GM12878 (cell line): ENCODE measurements at regions of chr1 and their contacts with region 1.

Region 1: DNA sequence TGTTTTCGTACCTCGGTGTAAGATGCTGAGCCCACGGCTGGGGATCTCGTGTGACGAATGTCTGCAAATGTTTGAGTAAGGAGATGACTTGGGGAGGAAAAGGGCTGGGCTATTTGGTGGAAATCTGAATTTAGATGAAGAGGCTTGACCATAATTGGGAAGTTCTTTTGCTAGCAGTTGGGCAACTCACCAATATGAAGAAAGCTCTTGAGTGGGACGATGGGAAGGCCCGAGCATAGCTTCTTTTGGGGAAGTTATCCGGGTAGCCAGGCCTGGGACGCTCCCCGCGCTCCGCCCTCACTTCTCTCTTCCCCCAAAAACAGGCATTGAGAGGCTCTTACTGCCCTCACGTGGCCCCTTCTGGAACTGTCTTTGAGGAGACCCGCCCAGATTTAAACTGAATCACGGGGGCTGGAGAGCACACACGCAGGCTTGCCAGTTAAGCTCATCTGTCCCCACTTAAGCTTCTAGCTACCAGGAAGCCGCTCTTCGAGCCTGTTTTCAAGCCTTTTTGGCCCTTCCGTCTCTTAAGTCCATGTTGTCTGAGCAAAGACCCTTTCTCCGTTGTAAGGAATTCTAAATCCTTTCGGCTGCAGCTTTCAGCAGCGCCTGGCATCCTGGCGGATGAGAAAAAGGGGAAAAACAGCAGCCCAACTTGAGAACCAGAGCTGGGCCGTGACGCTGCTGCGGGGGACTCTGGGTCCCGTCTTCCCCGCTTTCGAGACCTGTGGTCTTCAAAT is 93.1 kb downstream of the NID1 start:
- DNase-seq: peak; percentile 84
- ATAC-seq: peak; percentile 97
- H3K4me3 ChIP-seq: peak overlapping the region; percentile 58
- H3K27ac ChIP-seq: peak overlapping the region; percentile 80
- H3K4me1 ChIP-seq: peaks cover 7% of the 10 kb centered on the region
- H3K27me3 ChIP-seq: no peaks in the 10 kb centered on the region
- CTCF ChIP-seq: peak; percentile 87 to 95 (median 89); a peak in 5 of 6 replicates
- EP300 ChIP-seq: no peak
- POLR2A ChIP-seq: peak; percentile 75
- RAD21 ChIP-seq: peak; percentile 98

Region 2: DNA sequence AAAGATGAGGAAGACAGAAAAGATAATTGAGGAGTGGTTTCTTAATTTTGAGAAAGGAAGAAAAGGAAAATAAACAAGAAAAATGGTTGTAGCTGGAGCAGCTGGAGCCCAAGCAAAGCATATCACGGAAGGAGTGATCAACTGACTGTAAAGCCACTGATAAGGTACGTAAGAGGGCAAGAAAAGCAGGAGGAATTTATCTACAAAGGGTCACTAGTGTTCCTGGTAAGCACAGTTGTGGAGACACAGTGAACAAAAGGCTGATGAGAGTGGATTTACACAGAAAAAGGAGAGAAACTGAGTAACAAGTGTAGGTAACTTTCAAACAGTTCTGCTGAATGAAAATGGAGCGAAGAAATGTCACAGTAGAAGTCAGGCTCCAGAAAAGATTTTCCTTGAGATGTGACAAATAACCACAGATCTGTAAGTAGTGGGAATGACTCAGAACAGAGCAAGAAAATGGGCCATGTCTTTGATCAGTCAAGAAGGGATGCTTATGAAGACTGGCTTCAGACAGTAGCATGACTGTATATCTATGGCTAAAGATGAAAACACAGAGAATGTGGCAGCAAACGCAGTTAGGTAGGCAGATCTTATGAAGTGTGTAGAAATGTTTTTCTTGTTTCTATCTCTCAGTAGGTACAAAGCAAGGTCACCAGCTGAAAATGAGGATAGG is 765.1 kb before region 1 on chr1:
- CTCF ChIA-PET with region 1: no interaction called
- POLR2A ChIA-PET with region 1: no interaction called
- RAD21 ChIA-PET with region 1: no interaction called
- SMC1A ChIA-PET with region 1: no interaction called
- in situ Hi-C with region 1: no loop called
- intact Hi-C with region 1: no loop called
- DNase-seq: no peak
- ATAC-seq: peak; percentile 67
- H3K4me3 ChIP-seq: no peak overlapping the region
- H3K27ac ChIP-seq: no peak overlapping the region
- H3K4me1 ChIP-seq: no peaks in the 10 kb centered on the region
- H3K27me3 ChIP-seq: no peaks in the 10 kb centered on the region
- CTCF ChIP-seq: no peak
- EP300 ChIP-seq: no peak
- POLR2A ChIP-seq: no peak
- RAD21 ChIP-seq: no peak

Region 3: GRCh38 chr1:235513495-235514366 is 458.0 kb before region 1 on chr1:
- CTCF ChIA-PET with region 1: interaction called, 31 read pairs
- POLR2A ChIA-PET with region 1: no interaction called
- RAD21 ChIA-PET with region 1: interaction called, 19 read pairs
- SMC1A ChIA-PET with region 1: interaction called, 17 read pairs
- in situ Hi-C with region 1: loop called (anchors 5 kb)
- intact Hi-C with region 1: loop called (anchors 2 kb)
- DNase-seq: no peak
- ATAC-seq: peak; percentile 70
- H3K4me3 ChIP-seq: no peak overlapping the region
- H3K27ac ChIP-seq: no peak overlapping the region
- H3K4me1 ChIP-seq: no peaks in the 10 kb centered on the region; the same call in 1 of the 2 replicates
- H3K27me3 ChIP-seq: no peaks in the 10 kb centered on the region
- CTCF ChIP-seq: peak; percentile 79 to 93 (median 82)
- EP300 ChIP-seq: no peak
- POLR2A ChIP-seq: no peak
- RAD21 ChIP-seq: peak; percentile 94

Region 4: DNA sequence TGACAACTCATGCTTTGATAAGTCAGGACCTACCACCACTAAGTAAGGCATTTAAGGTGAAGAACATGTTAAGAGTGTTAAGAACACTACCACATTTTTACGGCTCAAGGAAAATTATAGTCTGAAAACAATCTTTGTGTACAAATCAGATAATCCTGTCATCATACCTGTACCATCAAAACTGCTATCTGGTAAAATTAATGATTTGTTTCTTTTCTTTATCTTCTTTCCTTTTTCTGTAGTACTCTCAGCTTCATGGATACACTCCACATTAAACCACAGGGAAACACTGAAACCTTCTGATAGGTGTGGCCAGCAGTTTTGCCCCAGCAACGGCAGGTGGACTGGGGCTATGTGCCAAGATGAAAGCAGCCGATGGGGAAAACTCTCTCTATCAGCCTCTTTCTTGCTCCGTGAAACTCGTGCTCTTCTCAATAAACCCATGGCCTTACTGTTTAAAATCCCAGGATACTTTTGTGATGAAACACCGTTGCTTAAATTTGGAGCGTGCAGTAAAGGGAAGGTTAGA is 180.1 kb before region 1 on chr1:
- CTCF ChIA-PET with region 1: interaction called, 9 read pairs
- POLR2A ChIA-PET with region 1: no interaction called
- RAD21 ChIA-PET with region 1: interaction called, 8 read pairs
- SMC1A ChIA-PET with region 1: interaction called, 11 read pairs
- in situ Hi-C with region 1: no loop called
- intact Hi-C with region 1: no loop called
- DNase-seq: no peak
- ATAC-seq: no peak
- H3K4me3 ChIP-seq: no peak overlapping the region
- H3K27ac ChIP-seq: no peak overlapping the region
- H3K4me1 ChIP-seq: no peaks in the 10 kb centered on the region
- H3K27me3 ChIP-seq: no peaks in the 10 kb centered on the region
- CTCF ChIP-seq: no peak
- EP300 ChIP-seq: no peak
- POLR2A ChIP-seq: no peak
- RAD21 ChIP-seq: no peak

Region 5: GRCh38 chr1:235855811-235856429 is 115.8 kb before region 1 on chr1:
- CTCF ChIA-PET with region 1: interaction called, 12 read pairs
- POLR2A ChIA-PET with region 1: interaction called, 3 read pairs
- RAD21 ChIA-PET with region 1: interaction called, 11 read pairs
- SMC1A ChIA-PET with region 1: interaction called, 12 read pairs
- in situ Hi-C with region 1: no loop called
- intact Hi-C with region 1: no loop called
- DNase-seq: no peak
- ATAC-seq: peak; percentile 86
- H3K4me3 ChIP-seq: no peak overlapping the region
- H3K27ac ChIP-seq: no peak overlapping the region
- H3K4me1 ChIP-seq: peaks cover 7% of the 10 kb centered on the region; the same call in 1 of the 2 replicates
- H3K27me3 ChIP-seq: no peaks in the 10 kb centered on the region
- CTCF ChIP-seq: no peak
- EP300 ChIP-seq: peak in 1 of 2 experiments; percentile 22; a peak in 2 of 4 replicates
- POLR2A ChIP-seq: no peak
- RAD21 ChIP-seq: no peak

Region 6: DNA sequence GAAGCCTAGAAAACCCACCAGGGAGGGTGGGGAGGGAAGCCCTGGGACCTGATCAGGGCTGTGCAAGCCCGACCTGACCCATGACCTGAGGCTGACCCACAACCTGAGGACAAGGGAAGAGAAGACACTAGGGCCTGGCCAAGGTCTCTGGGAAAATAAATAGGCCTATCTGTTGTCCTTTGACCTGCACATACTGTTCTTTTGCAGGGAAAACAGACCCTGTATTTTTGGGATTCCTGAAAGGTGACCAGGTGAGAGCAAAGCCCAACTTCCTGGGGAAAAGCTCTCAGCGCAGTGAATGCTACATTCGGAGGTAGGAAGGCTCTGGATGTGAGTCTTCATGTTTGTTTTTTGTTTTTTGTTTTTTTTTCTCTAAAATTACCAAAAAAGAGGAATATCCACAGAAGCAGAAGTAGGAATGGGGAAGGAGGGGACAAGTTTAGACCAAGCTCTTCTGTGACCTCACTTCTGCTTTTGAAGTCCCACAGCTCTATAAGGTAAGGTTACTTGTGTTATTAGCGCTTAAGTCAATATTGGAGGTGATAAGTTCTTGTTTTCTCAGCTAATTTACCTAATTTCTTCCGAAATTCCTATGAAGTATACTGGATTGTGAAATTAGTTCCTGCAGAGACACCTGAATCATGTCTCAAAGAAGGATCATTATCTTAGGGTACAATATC is 78.9 kb before region 1 on chr1:
- CTCF ChIA-PET with region 1: interaction called, 12 read pairs
- POLR2A ChIA-PET with region 1: interaction called, 3 read pairs
- RAD21 ChIA-PET with region 1: interaction called, 8 read pairs
- SMC1A ChIA-PET with region 1: interaction called, 11 read pairs
- in situ Hi-C with region 1: no loop called
- intact Hi-C with region 1: loop called (anchors 2 kb)
- DNase-seq: no peak
- ATAC-seq: 0 out of 3 replicates have a peak, but pooled peaks have one; percentile 19
- H3K4me3 ChIP-seq: 0 out of 2 replicates have a peak overlapping the region, but pooled peaks have one; percentile 4
- H3K27ac ChIP-seq: peak overlapping the region; percentile 54; the same call in 1 of the 2 replicates
- H3K4me1 ChIP-seq: peaks cover 18% of the 10 kb centered on the region
- H3K27me3 ChIP-seq: no peaks in the 10 kb centered on the region
- CTCF ChIP-seq: no peak
- EP300 ChIP-seq: no peak
- POLR2A ChIP-seq: no peak
- RAD21 ChIP-seq: no peak

Region 7: DNA sequence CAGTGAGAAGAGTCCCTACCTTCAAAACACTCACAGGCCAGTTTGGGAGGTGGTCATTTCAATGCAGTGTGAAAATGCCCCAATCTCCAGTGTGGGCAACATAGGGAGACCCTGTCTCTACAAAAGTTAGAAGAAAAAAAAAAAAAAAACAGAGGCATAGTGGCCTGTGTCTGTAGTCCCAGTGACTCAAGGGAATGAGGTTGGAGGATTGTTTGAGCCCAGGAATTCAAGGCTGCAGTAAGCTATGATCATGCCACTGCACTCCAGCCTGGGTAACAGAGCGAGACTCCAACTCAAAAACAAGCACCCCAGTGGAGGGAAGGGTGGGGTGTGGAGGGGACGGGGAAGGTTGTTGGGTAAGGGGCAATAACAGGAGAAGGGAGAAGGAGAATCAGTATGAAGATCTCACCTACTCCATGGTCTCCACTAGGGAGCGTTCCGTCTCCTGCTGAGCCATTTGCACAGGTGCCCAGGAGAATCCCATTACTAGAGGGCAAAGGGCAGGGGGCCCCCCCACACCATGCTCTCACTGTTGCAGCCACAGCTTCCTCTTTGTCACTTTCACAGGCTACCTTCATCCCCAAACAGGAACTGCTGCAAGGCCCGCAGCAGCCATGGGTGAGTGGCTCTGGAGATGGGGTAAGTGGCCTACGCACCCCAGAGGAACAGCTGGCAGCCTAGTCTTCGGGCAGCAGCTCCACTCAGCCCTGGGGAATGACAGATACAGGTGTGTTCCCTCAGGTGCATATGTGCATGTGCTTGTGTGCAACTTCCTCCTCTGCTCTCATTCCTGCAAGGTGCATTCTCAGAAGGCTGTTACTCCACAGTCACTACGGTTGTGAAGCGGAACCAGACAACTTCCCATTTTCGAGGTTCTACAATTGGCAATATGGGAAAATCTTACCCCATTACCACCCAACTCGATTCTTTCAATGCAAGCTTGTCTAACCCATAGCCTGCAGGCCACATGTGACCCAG is 17.1 kb before region 1 on chr1:
- CTCF ChIA-PET with region 1: interaction called, 106 read pairs
- POLR2A ChIA-PET with region 1: interaction called, 7 read pairs
- RAD21 ChIA-PET with region 1: interaction called, 41 read pairs
- SMC1A ChIA-PET with region 1: interaction called, 131 read pairs
- in situ Hi-C with region 1: no loop called
- intact Hi-C with region 1: loop called (anchors 1 kb)
- DNase-seq: peak; percentile 87
- ATAC-seq: peak; percentile 94
- H3K4me3 ChIP-seq: no peak overlapping the region
- H3K27ac ChIP-seq: peak overlapping the region; percentile 73
- H3K4me1 ChIP-seq: peaks cover 37% of the 10 kb centered on the region
- H3K27me3 ChIP-seq: no peaks in the 10 kb centered on the region
- CTCF ChIP-seq: peak; percentile 27 to 35 (median 33); a peak in 4 of 6 replicates
- EP300 ChIP-seq: peak; percentile 80 to 93
- POLR2A ChIP-seq: no peak
- RAD21 ChIP-seq: peak; percentile 16